CD4-positive, alpha-beta memory T cell (primary cell): ENCODE measurements at regions of chr9 and their contacts with region 1.

Region 1: DNA sequence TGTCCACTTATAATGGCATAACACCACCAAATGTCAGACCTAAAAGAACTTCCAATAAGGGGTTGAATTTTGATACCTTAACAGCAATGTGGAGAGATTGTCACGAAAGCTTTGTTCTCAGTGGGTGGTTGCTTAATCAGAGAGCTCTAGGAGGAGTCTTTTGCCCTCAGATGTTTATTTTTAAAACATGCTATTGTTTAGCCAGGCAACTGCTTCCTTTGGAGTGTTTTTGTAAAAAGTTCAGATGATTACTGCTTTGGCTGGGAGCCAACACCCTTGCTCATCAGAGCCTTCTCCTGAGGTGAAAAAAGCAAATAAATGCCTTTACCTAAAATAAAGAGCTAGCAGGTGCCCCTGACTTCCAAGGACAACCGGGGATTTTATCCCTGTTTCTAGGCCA is 65.0 kb downstream of the SLC1A1 start:
- DNase-seq: peak; percentile 26 to 61 (median 57)
- H3K4me3 ChIP-seq: no peak overlapping the region
- H3K4me3 Mint-ChIP-seq: peak overlapping the region in 2 of 8 donors; percentile 23 to 36
- H3K27ac ChIP-seq: no peak overlapping the region
- H3K27ac Mint-ChIP-seq: peak overlapping the region; percentile 5 to 86 (median 25)
- H3K4me1 ChIP-seq: peaks cover 32% of the 10 kb centered on the region
- H3K4me1 Mint-ChIP-seq: peaks cover 23 to 39% (median 34%) of the 10 kb centered on the region in 4 donors
- H3K27me3 ChIP-seq: no peaks in the 10 kb centered on the region
- H3K27me3 Mint-ChIP-seq: no peaks in the 10 kb centered on the region

Region 2: DNA sequence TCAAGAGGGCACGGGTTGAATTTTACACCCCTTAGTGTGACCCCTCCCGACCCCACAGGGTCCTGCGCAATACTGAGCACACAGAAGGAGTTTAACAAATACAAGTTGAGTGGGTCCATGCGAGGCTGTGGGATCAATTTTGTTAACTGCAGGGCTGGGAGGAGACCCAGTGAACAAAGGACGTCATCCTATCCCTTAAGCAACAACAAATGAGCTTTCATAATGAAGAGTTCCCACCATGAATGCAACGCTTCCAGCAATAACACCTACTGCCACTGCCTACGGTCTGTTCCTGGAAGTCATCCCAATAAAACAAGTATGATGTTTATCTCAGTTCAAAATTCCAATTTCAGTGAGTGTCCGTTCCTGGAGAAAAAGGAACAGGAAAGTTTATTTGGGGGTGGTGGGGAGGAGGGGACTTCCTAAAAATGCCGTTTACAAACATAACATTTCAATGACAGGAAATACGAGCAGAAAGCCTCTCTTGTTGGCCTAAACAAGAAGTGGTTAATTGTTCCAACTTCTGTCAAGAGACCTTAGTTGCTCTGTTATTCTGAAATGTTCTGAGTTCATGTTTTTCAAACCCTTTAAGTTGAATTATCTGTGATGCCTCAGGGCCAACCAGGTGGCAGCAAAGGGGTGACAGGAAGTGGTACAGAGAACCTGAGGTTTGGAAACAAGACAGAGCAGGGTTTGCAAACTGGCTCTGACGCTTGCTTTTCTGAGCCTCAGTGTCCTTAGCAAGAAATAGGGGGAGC is 41.1 kb after region 1 on chr9:
- CTCF ChIA-PET with region 1: no interaction called
- POLR2A ChIA-PET with region 1: no interaction called
- intact Hi-C with region 1: loop called (anchors 5 kb)
- DNase-seq: peak; percentile 77 to 83 (median 81)
- H3K4me3 ChIP-seq: no peak overlapping the region
- H3K4me3 Mint-ChIP-seq: peak overlapping the region; percentile 32 to 87 (median 62)
- H3K27ac ChIP-seq: peak overlapping the region; percentile 30
- H3K27ac Mint-ChIP-seq: peak overlapping the region; percentile 79 to 98 (median 95)
- H3K4me1 ChIP-seq: peaks cover 51% of the 10 kb centered on the region
- H3K4me1 Mint-ChIP-seq: peaks cover 32 to 62% (median 47%) of the 10 kb centered on the region in 4 donors
- H3K27me3 ChIP-seq: no peaks in the 10 kb centered on the region
- H3K27me3 Mint-ChIP-seq: no peaks in the 10 kb centered on the region